ENCODE measurements at regions of chr12 and their contacts with region 1.

Region 1: DNA sequence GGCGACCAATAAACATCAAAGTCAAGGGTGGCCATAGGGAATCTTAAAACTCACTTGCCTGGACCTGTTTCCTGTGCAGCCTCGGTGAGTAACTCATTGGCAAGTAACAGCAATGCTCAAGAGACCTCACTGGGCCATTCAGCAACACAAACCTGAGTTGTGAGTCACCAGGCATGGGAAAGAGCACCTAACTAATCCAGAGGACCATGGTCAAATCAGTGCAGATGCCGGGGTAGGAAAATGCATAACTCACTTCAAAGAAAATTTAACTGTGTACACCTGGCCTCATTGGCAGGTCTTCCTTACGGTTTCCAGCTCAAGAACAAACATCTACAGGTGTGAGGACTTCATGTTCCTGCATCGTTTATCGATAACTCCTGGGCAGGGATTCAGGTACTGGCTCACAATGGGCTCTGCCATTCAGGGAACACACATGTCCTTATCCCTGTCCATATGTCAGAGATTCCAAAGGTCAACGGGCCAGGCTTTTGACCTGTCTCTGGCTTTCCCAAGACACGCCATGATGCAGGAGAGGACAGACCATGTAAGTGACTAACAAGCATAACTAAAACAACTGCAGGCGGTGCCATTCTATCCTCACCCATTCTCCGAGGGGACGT is 211.8 kb downstream of the ANO2 start:
- DNase-seq: peak; percentile 24
- ATAC-seq: no peak
- H3K4me3 ChIP-seq: no peak overlapping the region
- H3K27ac ChIP-seq: no peak overlapping the region
- H3K4me1 ChIP-seq: no peaks in the 10 kb centered on the region
- H3K27me3 ChIP-seq: peaks cover 19% of the 10 kb centered on the region
- CTCF ChIP-seq: no peak
- POLR2A ChIP-seq: no peak
- RAD21 ChIP-seq: no peak

Region 2: GRCh38 chr12:5745265-5745888 is 12.1 kb after region 1 on chr12:
- CTCF ChIA-PET with region 1: interaction called, 14 read pairs
- POLR2A ChIA-PET with region 1: no interaction called
- dilution Hi-C with region 1: no loop called
- in situ Hi-C with region 1: no loop called
- intact Hi-C with region 1: no loop called
- DNase-seq: peak; percentile 58
- ATAC-seq: peak; percentile 96
- H3K4me3 ChIP-seq: no peak overlapping the region
- H3K27ac ChIP-seq: no peak overlapping the region
- H3K4me1 ChIP-seq: no peaks in the 10 kb centered on the region
- H3K27me3 ChIP-seq: peaks cover 23% of the 10 kb centered on the region
- CTCF ChIP-seq: peak; percentile 67
- POLR2A ChIP-seq: no peak
- RAD21 ChIP-seq: peak; percentile 58

Measured in IMR-90 (cell line).